Activated T-helper 2 cell treated with anti-CD3 and anti-CD28 coated beads, Interferon-gamma antibody, Interleukin-2, Interleukin-4, amounts not matched to agents 10 μg/mL and 5 μg/mL and 100 μg/mL, durations not matched to agents 14 hours and 24 hours and 36 hours (primary cell): ENCODE measurements at regions of chr7 and their contacts with region 1.

Region 1: GRCh38 chr7:139620676-139621344 is 97.3 kb downstream of the CLEC2L start:
- DNase-seq: peak; percentile 51
- H3K4me3 Mint-ChIP-seq: no peak overlapping the region
- H3K27ac Mint-ChIP-seq: no peak overlapping the region
- H3K4me1 Mint-ChIP-seq: peaks cover 18% of the 10 kb centered on the region
- H3K27me3 Mint-ChIP-seq: no peaks in the 10 kb centered on the region

Region 2: GRCh38 chr7:139452958-139453672 is 167.7 kb before region 1 on chr7:
- intact Hi-C with region 1: no loop called
- DNase-seq: no peak
- H3K4me3 Mint-ChIP-seq: no peak overlapping the region
- H3K27ac Mint-ChIP-seq: no peak overlapping the region
- H3K4me1 Mint-ChIP-seq: no peaks in the 10 kb centered on the region
- H3K27me3 Mint-ChIP-seq: no peaks in the 10 kb centered on the region

Region 3: GRCh38 chr7:139502226-139502625 is 118.6 kb before region 1 on chr7:
- intact Hi-C with region 1: loop called (anchors 5 kb)
- DNase-seq: no peak
- H3K4me3 Mint-ChIP-seq: no peak overlapping the region
- H3K27ac Mint-ChIP-seq: no peak overlapping the region
- H3K4me1 Mint-ChIP-seq: peaks cover 3% of the 10 kb centered on the region
- H3K27me3 Mint-ChIP-seq: no peaks in the 10 kb centered on the region

Region 4: GRCh38 chr7:139950848-139951512 is 330.2 kb after region 1 on chr7:
- intact Hi-C with region 1: no loop called
- DNase-seq: no peak
- H3K4me3 Mint-ChIP-seq: no peak overlapping the region
- H3K27ac Mint-ChIP-seq: no peak overlapping the region
- H3K4me1 Mint-ChIP-seq: no peaks in the 10 kb centered on the region
- H3K27me3 Mint-ChIP-seq: peaks cover 5% of the 10 kb centered on the region